OCI-LY7 (cell line): ENCODE measurements at regions of chr15 and their contacts with region 1.

Region 1: GRCh38 chr15:33086507-33087121 is 107.9 kb downstream of the FMN1 start:
- DNase-seq: peak; percentile 57
- H3K4me3 ChIP-seq: no peak overlapping the region
- H3K27ac ChIP-seq: no peak overlapping the region
- H3K4me1 ChIP-seq: no peaks in the 10 kb centered on the region
- CTCF ChIP-seq: peak; percentile 87

Region 2: GRCh38 chr15:33013827-33014445 is 72.7 kb before region 1 on chr15:
- CTCF ChIA-PET with region 1: no interaction called
- POLR2A ChIA-PET with region 1: no interaction called
- intact Hi-C with region 1: no loop called
- DNase-seq: no peak
- H3K4me3 ChIP-seq: no peak overlapping the region
- H3K27ac ChIP-seq: no peak overlapping the region
- H3K4me1 ChIP-seq: no peaks in the 10 kb centered on the region
- CTCF ChIP-seq: no peak

Region 3: GRCh38 chr15:33132722-33133345 is 46.2 kb after region 1 on chr15:
- CTCF ChIA-PET with region 1: no interaction called
- POLR2A ChIA-PET with region 1: no interaction called
- intact Hi-C with region 1: loop called (anchors 5 kb)
- DNase-seq: peak; percentile 26
- H3K4me3 ChIP-seq: no peak overlapping the region
- H3K27ac ChIP-seq: no peak overlapping the region
- H3K4me1 ChIP-seq: no peaks in the 10 kb centered on the region
- CTCF ChIP-seq: peak; percentile 78

Region 4: DNA sequence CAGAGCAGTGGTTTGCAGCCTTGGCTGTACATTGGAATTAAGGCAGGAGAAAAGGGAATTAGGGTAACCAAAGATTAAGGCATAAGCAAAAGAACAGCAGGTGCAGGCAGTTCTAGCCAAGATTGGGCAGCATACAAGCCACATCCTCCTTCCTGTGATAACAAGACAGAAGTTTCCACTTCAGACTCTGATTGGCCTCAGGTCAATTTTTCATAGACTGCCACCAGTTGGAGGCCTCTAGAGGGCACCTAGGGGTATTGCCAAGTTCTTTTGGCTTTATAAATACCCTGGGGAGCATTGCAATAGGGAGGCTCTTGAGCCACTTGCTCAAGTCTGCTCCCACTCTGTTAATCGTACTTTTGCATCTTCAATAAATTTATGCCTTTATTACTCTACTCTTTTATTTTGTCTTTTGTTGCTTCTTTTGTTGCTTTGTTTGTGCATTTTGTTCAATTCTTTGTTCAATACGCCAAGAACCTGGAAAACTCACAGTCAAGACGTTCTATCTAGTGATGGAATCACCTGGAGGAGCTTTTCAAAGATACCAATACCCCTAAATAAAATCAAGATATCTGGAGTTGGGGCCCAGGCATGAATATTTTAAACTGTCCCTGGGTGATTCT is 140.1 kb after region 1 on chr15:
- CTCF ChIA-PET with region 1: no interaction called
- POLR2A ChIA-PET with region 1: no interaction called
- intact Hi-C with region 1: loop called (anchors 2 kb)
- DNase-seq: peak; percentile 76
- H3K4me3 ChIP-seq: no peak overlapping the region
- H3K27ac ChIP-seq: no peak overlapping the region
- H3K4me1 ChIP-seq: peaks cover 4% of the 10 kb centered on the region
- CTCF ChIP-seq: peak; percentile 74

Region 5: DNA sequence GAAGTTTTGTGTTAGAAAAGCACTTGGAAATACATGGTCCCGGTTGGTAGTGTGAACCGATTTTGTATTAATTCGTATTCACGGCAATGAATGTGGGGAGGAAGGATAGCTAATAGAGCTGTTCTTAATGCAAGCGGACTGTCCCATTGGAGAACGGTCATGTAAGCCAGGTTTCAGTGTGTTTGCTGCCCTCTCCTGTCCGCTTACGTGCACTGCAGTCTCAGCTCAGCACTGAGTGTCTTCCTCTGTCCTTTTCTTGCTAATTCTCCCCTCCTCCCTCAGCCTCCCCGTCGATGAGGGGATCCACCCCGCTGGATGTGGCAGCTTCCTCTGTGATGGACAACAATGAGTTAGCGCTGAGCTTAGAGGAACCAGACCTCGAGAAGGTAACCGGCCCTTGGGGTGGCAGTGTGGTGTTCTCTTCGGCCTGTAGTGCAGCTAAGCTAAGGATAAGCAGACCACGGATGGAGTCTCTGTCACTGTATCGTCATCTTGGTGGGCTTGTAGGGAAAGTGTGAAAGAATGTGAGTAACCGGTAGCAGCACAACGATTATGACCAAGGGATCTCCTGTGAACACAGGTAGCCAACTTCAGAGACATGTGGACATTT is 614.2 kb after region 1 on chr15:
- CTCF ChIA-PET with region 1: no interaction called
- POLR2A ChIA-PET with region 1: no interaction called
- intact Hi-C with region 1: loop called (anchors 10 kb)
- DNase-seq: peak; percentile 65
- H3K4me3 ChIP-seq: no peak overlapping the region
- H3K27ac ChIP-seq: no peak overlapping the region
- H3K4me1 ChIP-seq: no peaks in the 10 kb centered on the region
- CTCF ChIP-seq: peak; percentile 95

Region 6: GRCh38 chr15:33729653-33730052 is 643.0 kb after region 1 on chr15:
- CTCF ChIA-PET with region 1: no interaction called
- POLR2A ChIA-PET with region 1: no interaction called
- intact Hi-C with region 1: loop called (anchors 5 kb)
- DNase-seq: peak; percentile 1
- H3K4me3 ChIP-seq: no peak overlapping the region
- H3K27ac ChIP-seq: no peak overlapping the region
- H3K4me1 ChIP-seq: no peaks in the 10 kb centered on the region
- CTCF ChIP-seq: peak; percentile 65